ENCODE measurements at regions of chr6 and their contacts with region 1.

Region 1: GRCh38 chr6:797479-798077 is 104.6 kb upstream of the EXOC2 start:
- DNase-seq: no peak
- ATAC-seq: peak; percentile 49

Region 2: GRCh38 chr6:593139-593906 is 204.3 kb before region 1 on chr6:
- intact Hi-C with region 1: loop called (anchors 10 kb)
- DNase-seq: no peak
- ATAC-seq: peak; percentile 12

Region 3: GRCh38 chr6:692855-693722 is 104.5 kb before region 1 on chr6 and contains the start of gene EXOC2:
- intact Hi-C with region 1: no loop called
- DNase-seq: peak; percentile 93
- ATAC-seq: peak; percentile 98
- total RNA-seq, gene EXOC2: 12.7 TPM

Region 4: GRCh38 chr6:1381481-1382330 is 584.1 kb after region 1 on chr6:
- intact Hi-C with region 1: loop called (anchors 5 kb)
- DNase-seq: peak; percentile 74
- ATAC-seq: peak; percentile 91